Activated CD8-positive, alpha-beta T cell treated with anti-CD3 and anti-CD28 coated beads, Interleukin-2, amount 10 ng/mL, durations not matched to agents 7 days and 5 days (primary cell): ENCODE measurements at regions of chr10 and their contacts with region 1.

Region 1: DNA sequence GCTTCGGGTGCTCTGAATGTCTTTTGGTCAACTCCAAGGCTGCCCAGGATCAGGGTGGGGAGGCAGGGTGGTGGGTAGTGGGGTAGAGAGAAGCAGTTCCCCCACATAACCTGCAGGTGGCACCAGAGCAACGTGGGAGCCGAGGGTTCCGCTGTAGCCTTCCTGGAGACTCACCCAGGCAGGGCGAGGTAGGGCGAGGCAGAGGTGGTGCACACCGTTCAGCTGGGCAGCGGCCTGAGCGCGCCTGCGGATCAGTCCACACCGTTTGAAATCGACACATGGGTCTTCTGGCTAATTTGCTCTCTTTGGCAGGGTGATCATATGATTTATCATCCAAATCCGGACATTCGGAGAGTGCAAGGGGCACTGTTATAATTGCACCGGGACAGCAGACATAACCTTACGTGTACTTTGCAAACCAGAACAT is 41.4 kb upstream of the MAP3K8 start:
- DNase-seq: peak; percentile 84
- ATAC-seq: peak; percentile 100
- H3K4me3 Mint-ChIP-seq: peak overlapping the region; percentile 35
- H3K27ac Mint-ChIP-seq: peak overlapping the region; percentile 54
- H3K4me1 Mint-ChIP-seq: peaks cover 16% of the 10 kb centered on the region
- H3K27me3 Mint-ChIP-seq: peaks cover 29% of the 10 kb centered on the region

Region 2: GRCh38 chr10:30433730-30434272 is 41.2 kb after region 1 on chr10 and contains the start of gene MAP3K8:
- CTCF ChIA-PET with region 1: interaction called, 19 read pairs
- POLR2A ChIA-PET with region 1: no interaction called
- DNase-seq: peak; percentile 85
- ATAC-seq: peak; percentile 80
- H3K4me3 Mint-ChIP-seq: peak within 1 kb of the TSS; percentile 92
- H3K27ac Mint-ChIP-seq: peak within 1 kb of the TSS; percentile 86
- H3K4me1 Mint-ChIP-seq: peaks cover 60% of the 10 kb centered on the region
- H3K27me3 Mint-ChIP-seq: no peaks in the 10 kb centered on the region
- total RNA-seq, gene MAP3K8: 26.0 to 27.7 TPM

Region 3: GRCh38 chr10:30534465-30535144 is 142.0 kb after region 1 on chr10:
- CTCF ChIA-PET with region 1: interaction called, 87 read pairs
- POLR2A ChIA-PET with region 1: no interaction called
- DNase-seq: peak; percentile 86
- ATAC-seq: peak; percentile 48
- H3K4me3 Mint-ChIP-seq: no peak overlapping the region
- H3K27ac Mint-ChIP-seq: no peak overlapping the region
- H3K4me1 Mint-ChIP-seq: peaks cover 59% of the 10 kb centered on the region
- H3K27me3 Mint-ChIP-seq: no peaks in the 10 kb centered on the region